H1 (cell line): ENCODE measurements at regions of chr6 and their contacts with region 1.

Region 1: GRCh38 chr6:79777713-79778579 is 146.8 kb downstream of the SH3BGRL2 start:
- DNase-seq: peak; percentile 70 to 98
- H3K4me3 ChIP-seq: peak overlapping the region in 1 of 4 experiments; percentile 48; a peak in 4 of 8 replicates
- H3K27ac ChIP-seq: no peak overlapping the region
- H3K4me1 ChIP-seq: peaks cover 0 to 3% (median 1%) of the 10 kb centered on the region in 4 experiments; a peak in 1 of 7 replicates
- H3K27me3 ChIP-seq: no peaks in the 10 kb centered on the region
- CTCF ChIP-seq: peak; percentile 94 to 96 (median 94)
- EP300 ChIP-seq: no peak
- POLR2A ChIP-seq: no peak
- RAD21 ChIP-seq: peak; percentile 82 to 87

Region 2: GRCh38 chr6:79724816-79725215 is 53.1 kb before region 1 on chr6:
- CTCF ChIA-PET with region 1: no interaction called
- POLR2A ChIA-PET with region 1: no interaction called
- DNase-seq: no peak
- H3K4me3 ChIP-seq: no peak overlapping the region
- H3K27ac ChIP-seq: no peak overlapping the region
- H3K4me1 ChIP-seq: no peaks in the 10 kb centered on the region
- H3K27me3 ChIP-seq: no peaks in the 10 kb centered on the region; a peak in 1 of 7 replicates
- CTCF ChIP-seq: no peak
- EP300 ChIP-seq: no peak
- POLR2A ChIP-seq: no peak
- RAD21 ChIP-seq: no peak

Region 3: DNA sequence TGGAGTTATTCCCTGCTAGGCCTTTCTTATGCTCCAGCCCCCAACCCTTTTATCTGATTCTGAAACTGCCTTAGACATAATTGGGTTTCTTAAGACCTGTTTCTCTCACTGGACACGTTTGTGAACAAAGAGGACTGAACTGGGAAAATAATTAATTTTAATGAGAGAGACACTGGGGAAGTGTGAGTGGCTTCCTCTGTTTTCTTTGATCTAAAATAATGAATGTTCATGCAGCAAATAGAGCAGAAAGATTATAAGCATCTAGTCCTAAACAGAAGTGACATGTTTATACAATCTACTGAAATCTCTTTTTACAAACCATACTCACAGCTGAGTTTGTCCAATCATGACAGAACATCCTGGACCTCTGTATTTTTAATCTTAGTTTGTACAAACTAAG is 10.8 kb after region 1 on chr6:
- CTCF ChIA-PET with region 1: interaction called, 12 read pairs
- POLR2A ChIA-PET with region 1: no interaction called
- DNase-seq: no peak
- H3K4me3 ChIP-seq: no peak overlapping the region
- H3K27ac ChIP-seq: no peak overlapping the region
- H3K4me1 ChIP-seq: no peaks in the 10 kb centered on the region
- H3K27me3 ChIP-seq: no peaks in the 10 kb centered on the region
- CTCF ChIP-seq: no peak
- EP300 ChIP-seq: no peak
- POLR2A ChIP-seq: no peak
- RAD21 ChIP-seq: no peak

Region 4: GRCh38 chr6:79813854-79814709 is 36.1 kb after region 1 on chr6:
- CTCF ChIA-PET with region 1: interaction called, 33 read pairs
- POLR2A ChIA-PET with region 1: no interaction called
- DNase-seq: peak; percentile 7 to 80
- H3K4me3 ChIP-seq: no peak overlapping the region
- H3K27ac ChIP-seq: no peak overlapping the region
- H3K4me1 ChIP-seq: peaks cover 0 to 7% (median 4%) of the 10 kb centered on the region in 4 experiments; a peak in 3 of 7 replicates
- H3K27me3 ChIP-seq: no peaks in the 10 kb centered on the region
- CTCF ChIP-seq: peak; percentile 27 to 83 (median 81)
- EP300 ChIP-seq: no peak
- POLR2A ChIP-seq: no peak
- RAD21 ChIP-seq: peak; percentile 78 to 85

Region 5: GRCh38 chr6:79902046-79902445 is 124.1 kb after region 1 on chr6:
- CTCF ChIA-PET with region 1: no interaction called
- POLR2A ChIA-PET with region 1: no interaction called
- DNase-seq: no peak
- H3K4me3 ChIP-seq: no peak overlapping the region
- H3K27ac ChIP-seq: no peak overlapping the region
- H3K4me1 ChIP-seq: no peaks in the 10 kb centered on the region
- H3K27me3 ChIP-seq: no peaks in the 10 kb centered on the region
- CTCF ChIP-seq: no peak
- EP300 ChIP-seq: no peak
- POLR2A ChIP-seq: no peak
- RAD21 ChIP-seq: no peak